ENCODE measurements at regions of chr4 and their contacts with region 1.

Region 1: DNA sequence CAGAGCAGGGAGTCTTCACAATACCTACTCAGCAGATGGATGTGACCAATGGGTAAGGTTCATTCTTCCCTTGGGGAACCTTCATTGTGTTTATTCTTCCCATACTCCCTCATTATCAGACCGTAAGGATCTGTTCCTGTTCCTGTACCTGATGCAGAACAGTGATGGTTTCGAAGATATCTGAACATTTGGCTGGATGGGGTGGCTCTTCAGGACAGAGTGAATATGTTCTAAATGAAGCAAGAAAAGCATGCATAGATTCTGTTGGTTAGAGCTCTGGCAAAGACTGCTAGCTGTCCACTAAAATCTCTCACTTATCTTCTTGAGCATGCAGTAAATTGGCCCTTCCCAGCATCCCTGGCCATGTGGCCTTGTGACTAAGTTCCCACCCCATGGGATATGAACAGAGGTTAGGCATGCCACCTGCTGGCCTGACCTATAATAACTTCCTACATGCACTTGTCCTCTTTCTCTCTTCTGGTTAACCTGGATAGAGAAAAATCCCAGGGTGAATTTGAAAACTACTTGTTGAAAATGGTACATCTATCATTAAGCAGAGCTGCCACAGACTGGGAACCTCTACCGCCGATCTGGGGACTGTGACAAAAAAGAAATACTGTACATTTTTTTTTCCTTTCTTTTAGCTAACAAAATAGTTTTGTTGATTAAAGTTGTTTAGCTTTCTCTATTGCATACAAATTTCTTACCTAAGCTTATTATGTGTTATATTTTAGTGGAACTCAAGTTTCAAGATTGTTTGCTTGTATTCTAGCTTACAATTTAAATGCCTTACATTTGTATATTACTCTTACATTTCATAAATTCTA is 60.0 kb upstream of the BANK1 start:
- DNase-seq: peak; percentile 70
- ATAC-seq: peak; percentile 94
- H3K4me3 ChIP-seq: no peak overlapping the region
- H3K27ac ChIP-seq: no peak overlapping the region
- H3K4me1 ChIP-seq: no peaks in the 10 kb centered on the region
- H3K27me3 ChIP-seq: no peaks in the 10 kb centered on the region
- CTCF ChIP-seq: peak; percentile 63
- POLR2A ChIP-seq: no peak
- RAD21 ChIP-seq: peak; percentile 82

Region 2: DNA sequence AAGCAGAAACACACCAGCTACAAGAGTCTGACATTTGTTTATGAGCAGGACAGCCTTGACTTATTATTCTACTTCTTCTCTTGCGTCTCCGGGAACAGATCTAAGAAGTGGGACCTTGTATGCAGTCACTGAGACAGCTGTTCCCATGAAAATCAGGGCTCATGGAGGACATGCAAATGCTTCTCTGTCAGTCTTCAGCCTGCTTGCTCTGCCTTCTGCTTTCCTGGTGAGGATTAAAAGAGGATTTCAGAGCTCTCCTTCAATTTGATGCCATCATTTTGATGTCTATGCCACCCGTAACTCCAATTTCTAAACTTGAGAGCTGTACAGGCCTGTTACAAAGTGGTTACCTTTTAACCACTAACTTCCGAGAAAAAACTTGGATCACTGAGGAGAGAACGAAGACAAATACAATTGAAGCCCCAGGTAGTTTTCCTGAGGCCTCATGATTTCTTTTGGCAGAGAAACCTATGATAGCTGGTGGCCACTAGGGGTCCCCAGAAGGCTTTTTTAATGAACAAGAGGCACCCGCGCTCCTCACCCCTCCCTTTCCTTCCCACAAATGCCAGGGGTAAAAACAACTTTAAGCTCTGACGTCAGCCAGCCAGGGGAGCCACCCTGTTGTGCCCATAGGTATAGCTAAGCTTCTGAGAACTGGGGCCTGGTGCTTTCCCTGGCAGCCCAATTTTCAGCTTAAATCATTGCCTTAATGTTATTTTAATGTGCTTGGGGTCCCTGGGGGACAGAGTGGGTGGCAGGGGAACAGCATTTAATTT is 1637.2 kb before region 1 on chr4:
- CTCF ChIA-PET with region 1: no interaction called
- POLR2A ChIA-PET with region 1: no interaction called
- dilution Hi-C with region 1: no loop called
- in situ Hi-C with region 1: no loop called
- intact Hi-C with region 1: loop called (anchors 10 kb)
- DNase-seq: peak; percentile 82
- ATAC-seq: peak; percentile 87
- H3K4me3 ChIP-seq: no peak overlapping the region
- H3K27ac ChIP-seq: no peak overlapping the region
- H3K4me1 ChIP-seq: peaks cover 3% of the 10 kb centered on the region
- H3K27me3 ChIP-seq: no peaks in the 10 kb centered on the region
- CTCF ChIP-seq: peak; percentile 78
- POLR2A ChIP-seq: no peak
- RAD21 ChIP-seq: peak; percentile 76

Region 3: GRCh38 chr4:100421361-100421978 is 1309.0 kb before region 1 on chr4:
- CTCF ChIA-PET with region 1: no interaction called
- POLR2A ChIA-PET with region 1: no interaction called
- dilution Hi-C with region 1: no loop called
- in situ Hi-C with region 1: no loop called
- intact Hi-C with region 1: loop called (anchors 2 kb)
- DNase-seq: peak; percentile 31
- ATAC-seq: peak; percentile 40
- H3K4me3 ChIP-seq: no peak overlapping the region
- H3K27ac ChIP-seq: no peak overlapping the region
- H3K4me1 ChIP-seq: no peaks in the 10 kb centered on the region
- H3K27me3 ChIP-seq: no peaks in the 10 kb centered on the region
- CTCF ChIP-seq: peak; percentile 45
- POLR2A ChIP-seq: no peak
- RAD21 ChIP-seq: peak; percentile 61

Region 4: GRCh38 chr4:100907465-100908454 is 822.7 kb before region 1 on chr4:
- CTCF ChIA-PET with region 1: no interaction called
- POLR2A ChIA-PET with region 1: no interaction called
- dilution Hi-C with region 1: no loop called
- in situ Hi-C with region 1: no loop called
- intact Hi-C with region 1: loop called (anchors 10 kb)
- DNase-seq: peak; percentile 5
- ATAC-seq: no peak
- H3K4me3 ChIP-seq: no peak overlapping the region
- H3K27ac ChIP-seq: no peak overlapping the region
- H3K4me1 ChIP-seq: no peaks in the 10 kb centered on the region
- H3K27me3 ChIP-seq: no peaks in the 10 kb centered on the region
- CTCF ChIP-seq: peak; percentile 21; the same call in 1 of the 2 replicates
- POLR2A ChIP-seq: no peak
- RAD21 ChIP-seq: peak; percentile 37

Region 5: DNA sequence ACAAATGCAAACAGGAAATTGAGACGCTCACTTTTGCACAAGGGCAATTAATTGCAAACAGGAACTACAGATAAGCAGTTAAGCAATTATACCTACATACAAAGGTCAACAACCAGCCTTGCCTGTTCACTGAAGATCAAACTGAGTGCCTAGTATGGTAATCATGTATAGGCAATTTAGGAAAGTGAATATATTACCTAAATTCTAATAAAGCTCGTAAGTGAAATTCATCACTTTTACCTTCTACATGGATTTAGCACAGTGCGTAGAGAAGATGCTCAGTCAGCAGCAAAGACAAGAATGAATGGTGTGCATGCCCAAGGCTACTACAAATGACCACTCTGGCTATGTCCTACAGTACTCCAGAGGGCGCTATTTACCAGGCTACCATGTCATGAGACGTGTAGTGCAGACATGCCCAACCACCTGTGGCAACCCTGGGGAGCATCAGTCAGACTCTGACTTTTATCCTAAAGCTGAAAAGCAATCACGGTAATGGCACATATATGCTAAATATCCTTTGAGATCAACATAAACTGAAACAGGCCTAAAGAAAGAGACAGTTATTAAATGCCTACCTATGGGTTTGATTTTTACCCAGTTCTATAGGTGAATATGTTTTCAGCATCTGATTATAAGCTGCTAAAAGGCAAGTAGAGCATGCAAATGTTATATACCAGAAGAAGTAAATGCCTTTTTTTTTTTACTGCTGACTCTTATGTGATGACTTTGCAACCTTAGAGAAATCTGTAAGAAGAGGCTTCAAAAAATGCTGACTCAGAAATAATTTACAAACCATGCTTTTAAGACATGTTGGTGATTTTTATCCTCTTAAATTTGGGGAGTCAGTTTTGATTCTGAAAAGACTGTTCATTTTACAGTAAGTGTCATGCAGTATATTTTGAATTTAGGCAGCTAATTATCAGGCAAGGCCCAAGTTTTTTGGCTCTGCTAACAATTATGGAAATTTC is 561.2 kb before region 1 on chr4:
- CTCF ChIA-PET with region 1: no interaction called
- POLR2A ChIA-PET with region 1: no interaction called
- dilution Hi-C with region 1: no loop called
- in situ Hi-C with region 1: loop called (anchors 25 kb)
- intact Hi-C with region 1: loop called (anchors 1 kb)
- DNase-seq: peak; percentile 65
- ATAC-seq: peak; percentile 84
- H3K4me3 ChIP-seq: no peak overlapping the region
- H3K27ac ChIP-seq: no peak overlapping the region
- H3K4me1 ChIP-seq: no peaks in the 10 kb centered on the region; the same call in none of the 2 replicates
- H3K27me3 ChIP-seq: no peaks in the 10 kb centered on the region
- CTCF ChIP-seq: peak; percentile 70
- POLR2A ChIP-seq: 0 out of 2 replicates have a peak, but pooled peaks have one; percentile 32
- RAD21 ChIP-seq: peak; percentile 91